ENCODE measurements at regions of chr2 and their contacts with region 1.

Region 1: DNA sequence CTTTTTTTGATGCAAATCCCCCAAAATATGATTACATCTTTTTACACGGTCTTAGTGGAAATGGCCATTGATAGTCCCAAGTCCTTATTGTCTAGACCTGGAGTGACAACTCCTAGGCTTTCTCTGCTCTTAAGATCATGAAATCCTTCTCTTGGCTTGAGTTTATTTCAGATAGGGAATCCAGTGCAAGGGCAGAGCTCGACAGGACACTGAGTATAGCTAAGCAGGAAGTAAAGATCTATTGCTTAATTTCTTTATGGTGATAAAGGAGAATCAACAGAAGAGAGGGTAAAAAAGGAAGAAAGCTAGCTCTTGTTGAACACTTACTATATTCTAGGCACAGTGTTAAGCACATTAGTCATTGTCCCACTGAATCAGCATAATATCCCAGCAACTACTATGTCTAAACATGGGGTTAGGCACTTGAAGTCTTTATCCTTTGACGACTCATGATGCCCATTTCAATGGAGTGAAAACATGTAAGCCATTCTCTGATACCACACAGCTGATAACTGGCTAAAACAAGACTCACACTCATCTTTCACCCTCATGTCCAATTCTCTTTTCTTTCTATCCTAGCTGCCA is 74.1 kb upstream of the LRATD1 start:
- DNase-seq: no peak
- ATAC-seq: no peak
- H3K4me3 ChIP-seq: no peak overlapping the region
- H3K27ac ChIP-seq: no peak overlapping the region
- H3K4me1 ChIP-seq: peaks cover 12% of the 10 kb centered on the region
- H3K27me3 ChIP-seq: no peaks in the 10 kb centered on the region
- CTCF ChIP-seq: no peak

Region 2: GRCh38 chr2:14516844-14517243 is 41.6 kb before region 1 on chr2:
- CTCF ChIA-PET with region 1: no interaction called
- POLR2A ChIA-PET with region 1: no interaction called
- intact Hi-C with region 1: loop called (anchors 5 kb)
- DNase-seq: peak; percentile 97
- ATAC-seq: peak; percentile 84
- H3K4me3 ChIP-seq: no peak overlapping the region
- H3K27ac ChIP-seq: peak overlapping the region; percentile 94
- H3K4me1 ChIP-seq: peaks cover 46% of the 10 kb centered on the region
- H3K27me3 ChIP-seq: no peaks in the 10 kb centered on the region
- CTCF ChIP-seq: no peak

Region 3: GRCh38 chr2:14614017-14614416 is 55.6 kb after region 1 on chr2:
- CTCF ChIA-PET with region 1: no interaction called
- POLR2A ChIA-PET with region 1: no interaction called
- intact Hi-C with region 1: no loop called
- DNase-seq: no peak
- ATAC-seq: no peak
- H3K4me3 ChIP-seq: no peak overlapping the region
- H3K27ac ChIP-seq: no peak overlapping the region
- H3K4me1 ChIP-seq: no peaks in the 10 kb centered on the region
- H3K27me3 ChIP-seq: no peaks in the 10 kb centered on the region
- CTCF ChIP-seq: no peak

Measured in PC-3 (cell line).